Heart right ventricle (tissue), 16 donors: ENCODE measurements at regions of chr2 and their contacts with region 1.

Region 1: DNA sequence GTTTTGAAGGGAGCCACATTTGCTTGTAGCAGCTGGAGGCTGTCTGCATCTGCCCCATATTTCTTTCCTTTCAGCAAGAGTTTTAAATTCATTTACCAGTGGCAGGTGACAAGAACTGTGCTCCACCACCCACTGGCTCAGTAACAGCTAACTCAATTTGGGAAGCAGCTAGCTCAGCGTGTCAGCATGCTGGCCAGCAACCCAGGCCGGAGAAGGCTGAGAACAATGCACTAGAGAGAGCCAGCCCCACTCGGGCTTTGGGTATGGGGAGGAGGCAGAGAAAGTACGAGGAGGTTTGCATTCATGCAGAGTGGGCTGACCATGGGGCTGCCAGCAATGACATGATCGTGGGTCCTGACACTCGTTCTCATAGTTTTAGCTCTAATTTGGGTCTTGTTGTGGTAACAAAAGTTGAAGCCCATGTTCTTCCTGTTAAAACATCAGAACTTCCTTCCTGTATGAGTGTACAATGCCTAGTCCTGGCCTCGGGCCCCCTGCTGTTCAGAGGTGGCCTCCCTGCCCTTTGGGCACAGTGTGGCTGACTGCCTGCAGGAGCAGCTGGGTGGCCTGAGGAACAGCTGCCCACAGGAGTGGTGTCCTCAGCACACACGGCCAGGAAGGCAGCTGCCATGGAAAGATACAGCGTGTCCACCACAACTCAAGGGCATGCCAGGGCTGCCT is 23.0 kb downstream of the CDC42EP3 start:
- DNase-seq: peak; percentile 49 to 74
- ATAC-seq: peak; percentile 65 to 83 (median 78)
- H3K4me3 ChIP-seq: peak overlapping the region in 2 of 10 donors; percentile 7 to 16
- H3K27ac ChIP-seq: peak overlapping the region; percentile 47 to 99 (median 84)
- H3K4me1 ChIP-seq: peaks cover 21 to 100% (median 94%) of the 10 kb centered on the region in 9 donors
- H3K27me3 ChIP-seq: no peaks in the 10 kb centered on the region
- CTCF ChIP-seq: peak; percentile 11 to 59 (median 32)

Region 2: GRCh38 chr2:37561615-37562569 is 86.6 kb before region 1 on chr2:
- intact Hi-C with region 1: loop called in 1 of 10 experiments (anchors 10 kb)
- DNase-seq: no peak
- ATAC-seq: peak in 5 of 8 donors; percentile 34 to 67 (median 54)
- H3K4me3 ChIP-seq: no peak overlapping the region
- H3K27ac ChIP-seq: peak overlapping the region in 1 of 10 donors; percentile 48
- H3K4me1 ChIP-seq: peaks cover 0 to 60% (median 14%) of the 10 kb centered on the region in 9 donors
- H3K27me3 ChIP-seq: no peaks in the 10 kb centered on the region
- CTCF ChIP-seq: no peak

Region 3: GRCh38 chr2:37570773-37571586 is 77.5 kb before region 1 on chr2:
- intact Hi-C with region 1: loop called in 2 of 10 experiments (anchors 10 kb)
- DNase-seq: no peak
- ATAC-seq: peak in 6 of 8 donors; percentile 54 to 84 (median 66)
- H3K4me3 ChIP-seq: no peak overlapping the region
- H3K27ac ChIP-seq: peak overlapping the region in 4 of 10 donors; percentile 8 to 51 (median 41)
- H3K4me1 ChIP-seq: peaks cover 0 to 27% (median 15%) of the 10 kb centered on the region in 9 donors
- H3K27me3 ChIP-seq: no peaks in the 10 kb centered on the region
- CTCF ChIP-seq: no peak

Region 4: GRCh38 chr2:37795938-37796337 is 147.5 kb after region 1 on chr2:
- intact Hi-C with region 1: loop called in 1 of 10 experiments (anchors 5 kb)
- DNase-seq: no peak
- ATAC-seq: no peak
- H3K4me3 ChIP-seq: no peak overlapping the region
- H3K27ac ChIP-seq: peak overlapping the region in 5 of 10 donors; percentile 3 to 85 (median 71)
- H3K4me1 ChIP-seq: peaks cover 0 to 34% (median 10%) of the 10 kb centered on the region in 9 donors
- H3K27me3 ChIP-seq: no peaks in the 10 kb centered on the region
- CTCF ChIP-seq: no peak

Region 5: GRCh38 chr2:37843556-37843955 is 195.1 kb after region 1 on chr2:
- intact Hi-C with region 1: no loop called
- DNase-seq: no peak
- ATAC-seq: no peak
- H3K4me3 ChIP-seq: no peak overlapping the region
- H3K27ac ChIP-seq: no peak overlapping the region
- H3K4me1 ChIP-seq: peaks cover 0 to 2% (median 0%) of the 10 kb centered on the region in 9 donors
- H3K27me3 ChIP-seq: peaks cover 0 to 3% (median 0%) of the 10 kb centered on the region in 7 donors
- CTCF ChIP-seq: no peak

Region 6: GRCh38 chr2:37871456-37872191 is 223.2 kb after region 1 on chr2:
- intact Hi-C with region 1: loop called in 1 of 10 experiments (anchors 5 kb)
- DNase-seq: no peak
- ATAC-seq: peak in 7 of 8 donors; percentile 3 to 52 (median 40)
- H3K4me3 ChIP-seq: no peak overlapping the region
- H3K27ac ChIP-seq: peak overlapping the region in 7 of 10 donors; percentile 43 to 84 (median 74)
- H3K4me1 ChIP-seq: peaks cover 16 to 94% (median 74%) of the 10 kb centered on the region in 9 donors
- H3K27me3 ChIP-seq: no peaks in the 10 kb centered on the region
- CTCF ChIP-seq: no peak